Tibial artery (tissue), 4 donors: ENCODE measurements at regions of chr20 and their contacts with region 1.

Region 1: DNA sequence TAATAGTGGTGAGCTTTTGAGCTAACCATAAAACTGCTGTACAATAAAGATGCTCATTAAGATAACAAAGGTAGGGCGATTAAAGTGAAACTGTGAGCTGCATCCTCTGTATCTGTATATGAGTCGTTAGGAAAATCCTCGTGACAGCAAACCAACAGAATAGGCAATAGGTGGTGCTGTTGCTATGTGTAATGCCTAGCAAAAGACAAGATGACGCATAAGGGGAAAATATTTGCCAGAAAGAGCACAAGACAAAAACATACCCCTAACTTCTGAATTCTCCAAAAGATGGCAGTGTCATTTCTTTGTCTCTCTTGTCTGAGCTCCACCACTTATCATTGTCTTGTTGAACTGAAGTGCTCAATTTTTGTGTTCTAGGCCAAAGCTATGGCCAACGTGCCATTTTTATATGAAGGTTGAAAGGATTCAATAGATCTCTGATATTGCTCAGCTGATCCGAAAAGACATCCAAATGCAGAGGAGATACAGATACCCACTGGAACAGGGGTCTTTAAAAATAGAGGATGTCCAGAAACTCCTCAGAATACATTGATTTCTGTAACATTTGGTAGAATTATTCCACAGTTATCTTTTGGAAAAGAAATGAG is 56.3 kb upstream of the ANKEF1 start:
- DNase-seq: peak in 1 of 2 donors; percentile 56
- H3K4me3 ChIP-seq: no peak overlapping the region
- H3K27ac ChIP-seq: no peak overlapping the region
- H3K4me1 ChIP-seq: peaks cover 0 to 6% (median 0%) of the 10 kb centered on the region in 4 donors
- H3K27me3 ChIP-seq: no peaks in the 10 kb centered on the region
- CTCF ChIP-seq: peak; percentile 69 to 85

Region 2: DNA sequence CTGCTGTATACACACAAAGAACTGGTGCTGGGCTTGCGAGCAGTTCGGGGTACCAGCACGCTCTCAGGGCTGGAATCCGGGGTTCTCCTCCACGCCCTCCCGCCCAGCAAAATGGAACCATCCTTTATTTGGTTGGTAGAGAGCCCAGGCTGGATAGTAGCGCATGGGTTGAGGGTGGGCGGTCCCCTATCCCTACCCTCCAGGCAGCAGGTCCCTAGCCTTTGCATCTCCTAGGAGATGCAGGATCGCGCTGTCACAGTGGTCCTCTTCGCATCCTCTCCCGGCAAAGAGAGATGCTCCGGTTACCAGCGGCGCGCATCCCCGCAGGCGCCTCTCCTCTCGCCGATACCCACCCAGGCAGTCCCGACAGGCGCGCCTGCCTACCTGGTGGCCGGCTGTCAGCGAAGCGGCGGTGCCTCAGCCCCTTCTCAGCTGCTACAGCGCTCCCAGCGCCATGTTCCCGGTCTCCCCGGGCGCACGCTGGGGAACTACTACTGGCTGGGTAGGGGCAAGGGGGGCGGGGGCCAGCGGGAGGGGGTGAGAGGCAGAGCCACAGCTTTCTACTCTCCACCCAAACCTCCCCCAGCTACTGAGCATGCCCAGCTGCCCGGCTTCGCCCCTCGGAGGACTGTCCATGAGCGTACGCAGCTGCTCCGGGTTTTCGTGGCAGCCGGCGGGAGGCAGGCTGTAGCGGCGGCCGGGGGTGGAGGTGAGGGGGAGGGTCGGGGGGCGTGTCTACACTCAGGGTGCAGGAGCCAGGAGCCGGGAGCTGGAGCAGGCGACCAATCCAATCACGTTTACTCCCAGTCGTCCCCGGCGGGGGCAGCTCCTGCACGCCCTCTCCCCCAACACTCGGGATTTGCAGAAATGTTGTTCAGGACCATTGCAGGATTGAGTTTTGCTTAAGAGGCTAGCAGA is 139.9 kb before region 1 on chr20 and contains the start of gene PAK5:
- intact Hi-C with region 1: no loop called
- DNase-seq: peak in 1 of 2 donors; percentile 65
- H3K4me3 ChIP-seq: peak within 1 kb of the TSS; percentile 42 to 48
- H3K27ac ChIP-seq: no peak within 1 kb of the TSS
- H3K4me1 ChIP-seq: peaks cover 0 to 16% (median 3%) of the 10 kb centered on the region in 4 donors
- H3K27me3 ChIP-seq: peaks cover 0 to 19% of the 10 kb centered on the region in 2 donors
- CTCF ChIP-seq: no peak

Region 3: GRCh38 chr20:9928281-9928737 is 50.2 kb before region 1 on chr20:
- intact Hi-C with region 1: no loop called
- DNase-seq: no peak
- H3K4me3 ChIP-seq: no peak overlapping the region
- H3K27ac ChIP-seq: no peak overlapping the region
- H3K4me1 ChIP-seq: no peaks in the 10 kb centered on the region
- H3K27me3 ChIP-seq: no peaks in the 10 kb centered on the region
- CTCF ChIP-seq: no peak

Region 4: DNA sequence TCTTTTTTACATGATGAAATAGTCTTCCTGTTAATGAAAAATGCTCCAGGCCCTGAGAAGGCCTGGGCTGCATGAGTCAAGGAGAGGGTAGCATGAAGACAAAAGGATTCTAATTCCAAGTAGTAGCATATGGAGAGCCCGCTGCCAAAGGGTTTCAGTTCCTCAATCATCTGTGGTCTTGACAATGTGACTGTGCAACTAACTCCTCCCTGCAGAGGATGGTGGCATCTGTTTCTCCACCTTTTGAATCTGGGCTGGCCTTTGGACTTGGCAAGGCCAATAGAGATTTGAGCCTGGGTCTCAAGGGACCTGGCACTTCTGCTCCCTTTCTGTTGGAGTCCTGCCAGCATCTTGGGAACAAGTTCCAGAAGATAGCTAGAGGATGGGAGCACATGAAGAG is 21.1 kb after region 1 on chr20:
- intact Hi-C with region 1: no loop called
- DNase-seq: peak in 1 of 2 donors; percentile 47
- H3K4me3 ChIP-seq: no peak overlapping the region
- H3K27ac ChIP-seq: no peak overlapping the region
- H3K4me1 ChIP-seq: no peaks in the 10 kb centered on the region
- H3K27me3 ChIP-seq: no peaks in the 10 kb centered on the region
- CTCF ChIP-seq: no peak

Region 5: DNA sequence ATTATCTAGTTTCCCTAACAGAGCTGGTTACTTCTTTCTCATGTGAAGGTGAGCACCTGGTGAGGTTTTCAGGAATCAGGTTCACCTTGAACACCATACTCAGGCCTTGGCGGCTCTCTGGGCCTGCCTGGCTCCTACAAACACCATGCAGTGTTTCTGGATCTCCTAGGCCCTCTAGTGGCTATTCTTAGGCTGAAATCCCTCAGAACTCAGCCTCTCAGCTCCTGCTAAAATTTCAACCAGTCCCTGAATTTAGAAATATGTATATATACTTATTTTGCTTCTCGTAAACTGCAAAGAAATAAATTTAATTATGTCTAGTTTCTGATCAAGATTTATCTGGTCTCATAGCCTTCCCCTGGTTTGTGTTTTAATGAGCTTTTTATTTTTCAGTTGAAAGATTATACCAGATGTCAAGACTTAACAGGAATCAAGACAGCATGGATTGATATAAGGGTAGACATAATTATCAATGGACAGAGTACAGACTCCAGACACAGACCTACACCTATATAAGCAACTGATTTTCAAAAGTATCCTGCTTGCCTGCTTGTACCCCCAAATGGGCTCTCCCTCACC is 112.2 kb after region 1 on chr20:
- intact Hi-C with region 1: loop called (anchors 5 kb)
- DNase-seq: peak in 1 of 2 donors; percentile 37
- H3K4me3 ChIP-seq: no peak overlapping the region
- H3K27ac ChIP-seq: no peak overlapping the region
- H3K4me1 ChIP-seq: no peaks in the 10 kb centered on the region
- H3K27me3 ChIP-seq: no peaks in the 10 kb centered on the region
- CTCF ChIP-seq: peak; percentile 53 to 64

Region 6: DNA sequence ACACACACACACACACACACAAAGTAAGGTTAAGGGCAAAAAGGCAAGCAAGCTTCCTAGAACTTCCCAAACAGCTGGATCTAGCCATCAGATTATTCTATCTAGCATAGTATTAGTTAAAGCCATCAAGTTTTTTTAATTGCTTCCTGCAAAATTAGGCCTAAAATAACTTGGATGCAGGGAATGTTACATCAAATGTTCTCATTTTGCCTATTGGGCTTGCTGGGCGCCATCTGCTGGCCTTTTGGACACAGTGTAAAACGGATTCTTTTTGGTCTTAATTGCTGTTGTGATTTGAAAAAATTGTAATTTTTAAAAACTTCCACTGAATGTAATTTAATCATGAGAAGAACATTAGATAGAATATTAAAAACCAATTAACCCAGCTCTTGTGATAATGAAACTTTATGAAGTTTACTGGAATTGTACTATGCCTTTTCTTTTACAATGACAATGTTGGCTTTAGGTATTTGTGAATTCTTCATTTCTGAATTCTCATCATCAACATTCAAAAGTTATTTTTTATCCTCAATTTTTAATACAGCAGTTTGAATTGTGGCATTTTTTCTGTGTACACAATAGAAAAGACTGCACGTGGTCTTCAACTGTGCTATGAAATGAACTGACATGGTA is 448.7 kb after region 1 on chr20:
- intact Hi-C with region 1: loop called (anchors 5 kb)
- DNase-seq: peak in 1 of 2 donors; percentile 51
- H3K4me3 ChIP-seq: no peak overlapping the region
- H3K27ac ChIP-seq: no peak overlapping the region
- H3K4me1 ChIP-seq: peaks cover 0 to 20% (median 4%) of the 10 kb centered on the region in 4 donors
- H3K27me3 ChIP-seq: no peaks in the 10 kb centered on the region
- CTCF ChIP-seq: peak; percentile 73 to 80

Region 7: DNA sequence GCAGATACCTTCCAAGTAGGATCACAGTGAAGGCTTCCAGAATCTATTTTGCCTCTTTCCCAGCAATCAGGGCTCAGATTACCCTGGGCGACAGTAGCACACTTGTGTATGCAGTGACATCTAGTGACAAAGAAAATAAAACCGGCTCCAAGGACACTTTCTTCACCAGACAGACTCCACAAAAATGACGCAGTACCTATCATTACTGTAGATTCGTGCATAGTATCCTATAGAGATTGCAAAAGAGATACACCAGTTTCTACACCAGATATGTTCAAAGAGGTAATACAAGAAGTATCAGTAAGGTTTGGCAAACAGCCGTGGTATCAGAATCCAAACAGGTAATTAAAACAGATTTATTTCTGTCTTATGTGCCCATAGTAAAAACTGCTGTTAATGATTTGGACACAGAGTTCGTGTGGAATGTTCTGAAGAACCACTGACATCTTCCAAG is 1295.7 kb after region 1 on chr20:
- intact Hi-C with region 1: loop called (anchors 10 kb)
- DNase-seq: peak in 1 of 2 donors; percentile 32
- H3K4me3 ChIP-seq: no peak overlapping the region
- H3K27ac ChIP-seq: no peak overlapping the region
- H3K4me1 ChIP-seq: peaks cover 0 to 10% (median 0%) of the 10 kb centered on the region in 4 donors
- H3K27me3 ChIP-seq: peaks cover 0 to 2% of the 10 kb centered on the region in 2 donors
- CTCF ChIP-seq: peak; percentile 58 to 66